GM12878 (cell line): ENCODE measurements at regions of chr2 and their contacts with region 1.

Region 1: GRCh38 chr2:68487773-68488355 is 20.5 kb downstream of the APLF start:
- DNase-seq: no peak
- ATAC-seq: peak; percentile 74
- H3K4me3 ChIP-seq: no peak overlapping the region
- H3K27ac ChIP-seq: no peak overlapping the region
- H3K4me1 ChIP-seq: peaks cover 5% of the 10 kb centered on the region; the same call in 1 of the 2 replicates
- H3K27me3 ChIP-seq: no peaks in the 10 kb centered on the region
- CTCF ChIP-seq: peak in 2 of 3 experiments; percentile 26 to 49; a peak in 3 of 6 replicates
- EP300 ChIP-seq: no peak
- POLR2A ChIP-seq: no peak
- RAD21 ChIP-seq: peak; percentile 37

Region 2: GRCh38 chr2:68565858-68566257 is 78.0 kb after region 1 on chr2:
- CTCF ChIA-PET with region 1: no interaction called
- POLR2A ChIA-PET with region 1: no interaction called
- RAD21 ChIA-PET with region 1: no interaction called
- SMC1A ChIA-PET with region 1: no interaction called
- in situ Hi-C with region 1: no loop called
- intact Hi-C with region 1: no loop called
- DNase-seq: no peak
- ATAC-seq: no peak
- H3K4me3 ChIP-seq: no peak overlapping the region
- H3K27ac ChIP-seq: no peak overlapping the region
- H3K4me1 ChIP-seq: no peaks in the 10 kb centered on the region
- H3K27me3 ChIP-seq: no peaks in the 10 kb centered on the region
- CTCF ChIP-seq: no peak
- EP300 ChIP-seq: no peak
- POLR2A ChIP-seq: no peak
- RAD21 ChIP-seq: no peak

Region 3: GRCh38 chr2:68715353-68716041 is 227.6 kb after region 1 on chr2:
- CTCF ChIA-PET with region 1: interaction called, 9 read pairs
- POLR2A ChIA-PET with region 1: no interaction called
- RAD21 ChIA-PET with region 1: interaction called, 9 read pairs
- SMC1A ChIA-PET with region 1: interaction called, 9 read pairs
- in situ Hi-C with region 1: no loop called
- intact Hi-C with region 1: loop called (anchors 1 kb)
- DNase-seq: peak; percentile 59
- ATAC-seq: peak; percentile 90
- H3K4me3 ChIP-seq: 0 out of 2 replicates have a peak overlapping the region, but pooled peaks have one; percentile 16
- H3K27ac ChIP-seq: peak overlapping the region; percentile 66; the same call in 1 of the 2 replicates
- H3K4me1 ChIP-seq: peaks cover 31% of the 10 kb centered on the region
- H3K27me3 ChIP-seq: no peaks in the 10 kb centered on the region
- CTCF ChIP-seq: peak; percentile 74 to 81 (median 77)
- EP300 ChIP-seq: no peak
- POLR2A ChIP-seq: no peak
- RAD21 ChIP-seq: peak; percentile 78

Region 4: DNA sequence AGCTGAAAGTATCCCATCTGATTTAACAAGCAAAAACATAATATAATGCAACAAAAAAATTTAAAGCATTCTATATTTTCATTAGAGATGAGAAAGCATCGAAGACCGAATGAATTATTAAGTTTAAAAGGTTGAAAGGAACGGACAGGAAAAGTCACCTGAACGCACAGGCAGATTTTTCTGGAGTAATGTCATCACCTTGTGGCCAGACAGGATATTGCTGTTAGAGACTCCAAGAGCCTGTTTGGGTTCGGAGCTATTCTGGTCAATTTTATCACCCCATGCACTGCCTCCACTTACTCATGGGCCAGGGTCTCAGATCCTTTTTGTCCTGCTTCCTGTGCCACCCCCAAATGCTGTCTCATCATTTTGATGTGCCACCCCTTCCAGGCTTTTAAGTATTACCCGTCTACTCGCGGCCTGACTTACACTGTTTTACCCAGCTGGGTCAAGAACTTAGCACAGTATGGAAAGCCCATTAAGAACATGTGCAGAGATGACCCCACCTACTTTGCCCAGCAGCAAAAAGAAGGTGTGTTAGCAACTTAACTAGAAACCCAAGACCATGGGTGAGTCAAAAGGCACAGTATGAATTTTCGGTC is 437.5 kb after region 1 on chr2:
- CTCF ChIA-PET with region 1: interaction called, 8 read pairs
- POLR2A ChIA-PET with region 1: no interaction called
- RAD21 ChIA-PET with region 1: interaction called, 6 read pairs
- SMC1A ChIA-PET with region 1: interaction called, 4 read pairs
- in situ Hi-C with region 1: no loop called
- intact Hi-C with region 1: loop called (anchors 5 kb)
- DNase-seq: peak; percentile 12
- ATAC-seq: peak; percentile 83
- H3K4me3 ChIP-seq: no peak overlapping the region
- H3K27ac ChIP-seq: no peak overlapping the region
- H3K4me1 ChIP-seq: no peaks in the 10 kb centered on the region
- H3K27me3 ChIP-seq: peaks cover 0 to 2% of the 10 kb centered on the region in 2 experiments; a peak in 3 of 4 replicates
- CTCF ChIP-seq: peak; percentile 87 to 96 (median 91)
- EP300 ChIP-seq: no peak
- POLR2A ChIP-seq: no peak
- RAD21 ChIP-seq: peak; percentile 90